GM12878 (cell line): ENCODE measurements at regions of chr11 and their contacts with region 1.

Region 1: DNA sequence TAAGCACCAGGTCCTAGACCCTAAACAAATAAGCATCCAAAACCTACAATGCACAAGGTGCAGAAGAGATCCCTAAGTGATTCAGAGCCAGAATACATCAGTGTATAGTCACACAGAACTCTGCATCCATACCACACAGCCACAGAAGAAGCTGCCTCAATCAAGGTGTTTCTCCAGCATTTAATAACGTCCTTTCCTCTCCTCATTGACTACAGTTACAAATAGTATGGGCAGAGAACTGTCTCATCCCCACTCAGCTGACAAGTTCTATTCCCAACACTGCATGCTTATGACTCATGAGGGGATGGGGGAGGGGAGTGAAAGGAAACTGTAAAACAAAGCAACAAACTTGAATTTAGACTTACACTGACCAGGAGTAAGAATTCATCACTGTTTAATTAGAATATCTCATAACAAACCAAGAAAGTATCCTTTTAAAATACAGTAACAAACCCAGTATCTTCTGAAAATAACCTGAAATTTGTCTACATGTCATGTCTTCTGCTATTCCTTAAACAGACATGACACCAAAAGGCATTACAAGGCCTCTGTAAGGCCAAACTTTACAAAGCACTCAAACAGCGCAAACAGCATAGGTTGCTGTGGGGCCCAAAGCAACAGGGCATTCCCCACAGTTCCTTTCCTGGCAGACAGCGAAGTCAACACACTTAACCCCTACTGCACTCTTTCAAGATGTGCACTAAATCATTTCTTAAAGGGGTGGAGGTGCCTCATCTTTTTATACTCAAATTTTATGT is 29.3 kb downstream of the CELF1 start:
- DNase-seq: no peak
- ATAC-seq: peak; percentile 85
- H3K4me3 ChIP-seq: peak overlapping the region; percentile 29; the same call in 1 of the 2 replicates
- H3K27ac ChIP-seq: peak overlapping the region; percentile 37
- H3K4me1 ChIP-seq: peaks cover 48% of the 10 kb centered on the region
- H3K27me3 ChIP-seq: no peaks in the 10 kb centered on the region
- CTCF ChIP-seq: no peak
- EP300 ChIP-seq: no peak
- POLR2A ChIP-seq: no peak
- RAD21 ChIP-seq: no peak

Region 2: GRCh38 chr11:47538741-47539574 is 15.3 kb after region 1 on chr11:
- CTCF ChIA-PET with region 1: interaction called, 6 read pairs
- POLR2A ChIA-PET with region 1: interaction called, 9 read pairs
- RAD21 ChIA-PET with region 1: interaction called, 4 read pairs
- SMC1A ChIA-PET with region 1: interaction called, 11 read pairs
- in situ Hi-C with region 1: no loop called
- intact Hi-C with region 1: no loop called
- DNase-seq: no peak
- ATAC-seq: no peak
- H3K4me3 ChIP-seq: no peak overlapping the region
- H3K27ac ChIP-seq: no peak overlapping the region
- H3K4me1 ChIP-seq: peaks cover 8% of the 10 kb centered on the region
- H3K27me3 ChIP-seq: no peaks in the 10 kb centered on the region
- CTCF ChIP-seq: no peak
- EP300 ChIP-seq: no peak
- POLR2A ChIP-seq: no peak
- RAD21 ChIP-seq: no peak